HEK293 (cell line): ENCODE measurements at regions of chr2 and their contacts with region 1.

Region 1: GRCh38 chr2:68031542-68032160 is 31.2 kb downstream of the C1D start:
- H3K4me3 ChIP-seq: no peak overlapping the region
- H3K27ac ChIP-seq: no peak overlapping the region
- H3K4me1 ChIP-seq: peaks cover 10% of the 10 kb centered on the region; the same call in 1 of the 2 replicates
- CTCF ChIP-seq: 0 out of 2 replicates have a peak, but pooled peaks have one; percentile 57

Region 2: DNA sequence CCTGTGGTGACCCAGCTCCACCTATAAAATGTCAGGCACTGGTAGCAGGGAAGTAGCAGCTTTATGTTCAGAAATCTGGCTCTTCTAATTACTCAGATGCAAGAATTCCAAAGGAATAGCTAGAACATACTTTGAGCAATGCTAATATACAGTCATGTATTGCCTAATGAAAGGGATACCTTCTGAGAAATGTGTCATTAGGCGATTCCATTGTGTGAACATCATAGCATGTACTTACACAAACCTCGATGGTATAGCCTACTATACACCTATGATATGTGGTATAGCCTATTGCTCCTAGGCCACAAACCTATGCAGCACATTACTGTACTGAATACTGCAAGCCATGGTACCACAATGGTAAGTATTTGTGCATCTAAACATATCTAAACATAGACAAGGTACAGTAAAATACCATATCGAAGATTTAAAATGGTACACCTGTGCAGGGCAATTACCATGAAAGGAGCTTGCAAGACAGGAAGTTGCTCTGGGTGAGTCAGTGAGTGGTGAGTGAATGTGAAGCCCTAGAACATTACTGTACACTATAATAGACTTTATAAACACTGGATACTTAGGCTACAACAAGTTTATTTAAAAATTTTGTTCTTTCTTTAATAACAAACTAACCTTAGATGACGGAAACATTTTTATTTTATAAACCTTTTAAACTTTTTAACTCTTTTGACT is 684.8 kb before region 1 on chr2:
- CTCF ChIA-PET with region 1: no interaction called
- POLR2A ChIA-PET with region 1: no interaction called
- H3K4me3 ChIP-seq: no peak overlapping the region
- H3K27ac ChIP-seq: no peak overlapping the region
- H3K4me1 ChIP-seq: no peaks in the 10 kb centered on the region
- CTCF ChIP-seq: no peak

Region 3: GRCh38 chr2:67733517-67733916 is 298.1 kb before region 1 on chr2:
- CTCF ChIA-PET with region 1: interaction called, 14 read pairs
- POLR2A ChIA-PET with region 1: no interaction called
- H3K4me3 ChIP-seq: no peak overlapping the region
- H3K27ac ChIP-seq: no peak overlapping the region
- H3K4me1 ChIP-seq: no peaks in the 10 kb centered on the region
- CTCF ChIP-seq: no peak

Region 4: DNA sequence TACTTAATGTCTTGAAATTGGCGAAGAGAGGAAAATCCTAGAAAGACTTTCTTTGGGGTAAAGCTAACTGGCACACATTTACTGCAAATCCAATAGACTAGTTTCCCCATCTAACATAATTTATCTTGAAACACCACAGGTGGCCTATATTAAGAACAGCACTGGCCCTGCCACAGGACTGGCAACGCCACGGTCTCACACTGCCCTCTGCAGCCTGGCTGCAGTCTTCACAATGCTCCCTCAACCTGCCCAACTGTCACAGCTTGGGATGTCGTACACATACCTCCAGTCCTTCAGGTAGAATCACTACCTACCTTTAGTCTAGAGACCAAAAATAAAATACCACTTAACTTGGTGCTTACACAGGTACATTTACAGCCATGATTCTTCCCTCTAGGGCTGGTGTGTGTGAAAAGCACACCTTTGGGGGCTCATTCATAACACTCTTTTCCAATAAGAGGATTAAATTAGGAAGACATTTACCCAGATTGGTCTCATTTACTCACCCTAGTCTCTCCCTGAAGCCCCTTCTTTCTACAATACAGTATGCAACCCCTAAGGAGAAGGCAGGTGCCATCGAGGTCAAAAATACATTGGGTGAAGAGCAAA is 191.1 kb before region 1 on chr2:
- CTCF ChIA-PET with region 1: interaction called, 23 read pairs
- POLR2A ChIA-PET with region 1: no interaction called
- H3K4me3 ChIP-seq: no peak overlapping the region
- H3K27ac ChIP-seq: no peak overlapping the region
- H3K4me1 ChIP-seq: peaks cover 2% of the 10 kb centered on the region
- CTCF ChIP-seq: peak; percentile 91

Region 5: GRCh38 chr2:67846370-67847070 is 185.1 kb before region 1 on chr2:
- CTCF ChIA-PET with region 1: interaction called, 23 read pairs
- POLR2A ChIA-PET with region 1: no interaction called
- H3K4me3 ChIP-seq: no peak overlapping the region
- H3K27ac ChIP-seq: peak overlapping the region; percentile 89
- H3K4me1 ChIP-seq: peaks cover 7% of the 10 kb centered on the region
- CTCF ChIP-seq: peak; percentile 67

Region 6: DNA sequence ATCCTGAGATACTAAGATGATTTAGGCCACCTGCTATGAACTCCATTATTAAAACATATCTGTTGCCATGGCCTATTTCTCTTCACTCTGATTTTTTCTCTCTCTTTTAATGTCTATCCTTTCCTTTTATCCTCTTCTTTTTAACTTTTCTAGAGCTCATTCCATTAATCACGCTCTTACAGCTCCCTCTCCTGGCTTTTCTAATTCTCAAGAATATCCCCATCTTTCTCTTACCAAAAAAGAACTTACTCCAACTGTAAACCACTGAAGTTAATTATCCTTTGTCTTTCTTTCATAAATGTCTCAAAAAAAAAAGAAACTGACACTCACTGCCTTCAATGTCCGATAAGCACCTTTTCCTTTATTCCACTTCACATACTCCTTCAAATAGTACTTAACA is 212.8 kb after region 1 on chr2:
- CTCF ChIA-PET with region 1: no interaction called
- POLR2A ChIA-PET with region 1: no interaction called
- H3K4me3 ChIP-seq: no peak overlapping the region
- H3K27ac ChIP-seq: peak overlapping the region; percentile 7; the same call in 1 of the 2 replicates
- H3K4me1 ChIP-seq: peaks cover 36% of the 10 kb centered on the region
- CTCF ChIP-seq: no peak

Region 7: GRCh38 chr2:68263632-68264031 is 232.0 kb after region 1 on chr2:
- CTCF ChIA-PET with region 1: no interaction called
- POLR2A ChIA-PET with region 1: no interaction called
- H3K4me3 ChIP-seq: no peak overlapping the region
- H3K27ac ChIP-seq: no peak overlapping the region
- H3K4me1 ChIP-seq: no peaks in the 10 kb centered on the region
- CTCF ChIP-seq: no peak